Mammary epithelial cell (primary cell): ENCODE measurements at regions of chr17 and their contacts with region 1.

Region 1: DNA sequence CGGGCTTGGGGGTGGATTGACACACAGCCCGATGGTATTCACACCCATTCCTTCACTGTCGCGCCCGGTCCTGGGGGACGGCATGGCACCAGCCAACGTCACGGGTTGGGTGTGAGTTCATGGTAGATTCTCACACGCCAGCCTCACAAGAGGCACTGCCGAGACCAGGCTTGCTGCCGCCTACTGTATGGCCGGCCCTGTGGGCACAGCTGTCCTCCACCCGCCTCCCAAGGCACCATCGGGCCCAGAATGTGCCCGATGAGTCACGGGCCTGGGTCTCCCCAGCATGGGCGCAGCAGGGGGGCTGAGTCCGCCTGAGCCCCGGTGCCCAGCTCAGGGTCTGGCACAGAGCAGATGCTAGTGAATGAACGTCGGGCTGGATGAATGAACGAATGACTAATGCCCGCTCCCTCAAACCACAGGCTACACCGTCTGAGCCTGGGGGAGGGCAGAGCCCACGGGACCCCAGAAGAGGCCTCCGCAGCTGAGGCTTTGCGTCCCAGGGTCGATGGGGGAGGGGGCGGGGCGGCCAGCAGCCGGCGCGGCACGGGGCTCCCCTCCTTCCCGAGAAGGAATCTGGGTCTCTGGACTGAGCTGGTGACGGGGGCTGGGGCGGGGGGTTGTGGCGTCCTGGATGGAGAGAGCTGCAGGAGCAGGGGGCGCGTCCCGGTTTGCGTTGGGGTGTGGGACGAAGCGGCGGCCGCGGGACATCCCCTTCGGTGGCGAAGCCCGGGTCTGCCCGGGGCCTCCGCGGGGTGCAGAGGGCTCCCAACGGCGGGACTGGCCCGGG is 829 bp downstream of the PITPNM3 start:
- DNase-seq: peak; percentile 76
- H3K4me3 ChIP-seq: peak overlapping the region; percentile 65 to 75 (median 67)
- H3K27ac ChIP-seq: peak overlapping the region; percentile 42
- H3K4me1 ChIP-seq: peaks cover 36% of the 10 kb centered on the region
- H3K27me3 ChIP-seq: no peaks in the 10 kb centered on the region
- CTCF ChIP-seq: peak in 1 of 2 donors; percentile 11

Region 2: GRCh38 chr17:5950878-5951277 is 604.6 kb before region 1 on chr17:
- CTCF ChIA-PET with region 1: no interaction called
- dilution Hi-C with region 1: no loop called
- in situ Hi-C with region 1: no loop called
- intact Hi-C with region 1: no loop called
- DNase-seq: no peak
- H3K4me3 ChIP-seq: no peak overlapping the region
- H3K27ac ChIP-seq: no peak overlapping the region
- H3K4me1 ChIP-seq: no peaks in the 10 kb centered on the region
- H3K27me3 ChIP-seq: peaks cover 8% of the 10 kb centered on the region
- CTCF ChIP-seq: no peak

Region 3: GRCh38 chr17:6303664-6304063 is 251.9 kb before region 1 on chr17:
- CTCF ChIA-PET with region 1: no interaction called
- dilution Hi-C with region 1: no loop called
- in situ Hi-C with region 1: no loop called
- intact Hi-C with region 1: no loop called
- DNase-seq: peak; percentile 34
- H3K4me3 ChIP-seq: no peak overlapping the region
- H3K27ac ChIP-seq: no peak overlapping the region
- H3K4me1 ChIP-seq: no peaks in the 10 kb centered on the region
- H3K27me3 ChIP-seq: no peaks in the 10 kb centered on the region
- CTCF ChIP-seq: no peak

Region 4: GRCh38 chr17:6507535-6507934 is 48.0 kb before region 1 on chr17:
- CTCF ChIA-PET with region 1: no interaction called
- dilution Hi-C with region 1: loop called (anchors 5 kb)
- in situ Hi-C with region 1: loop called in 1 of 2 experiments (anchors 10 kb)
- intact Hi-C with region 1: loop called (anchors 1 kb)
- DNase-seq: peak; percentile 86
- H3K4me3 ChIP-seq: no peak overlapping the region
- H3K27ac ChIP-seq: no peak overlapping the region
- H3K4me1 ChIP-seq: peaks cover 30% of the 10 kb centered on the region
- H3K27me3 ChIP-seq: no peaks in the 10 kb centered on the region
- CTCF ChIP-seq: no peak

Region 5: DNA sequence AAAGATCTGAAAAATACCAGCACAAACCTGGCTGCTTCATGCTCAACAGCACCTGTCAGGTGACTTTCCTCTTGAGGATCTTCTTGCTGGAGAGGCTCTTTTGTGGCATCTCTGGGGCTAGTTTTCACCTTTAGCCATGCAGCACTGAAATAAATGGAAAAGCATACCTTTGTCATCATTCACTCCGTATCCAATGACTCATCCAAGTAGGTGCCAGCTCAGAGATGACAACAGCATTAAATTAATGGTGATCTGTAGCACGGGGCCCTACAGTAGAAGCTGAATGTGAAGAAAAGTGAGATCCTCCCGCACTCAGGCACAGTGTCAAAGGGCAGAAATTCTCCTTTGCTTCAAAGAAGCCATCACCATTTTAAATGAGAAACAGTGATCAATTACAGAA is 52.8 kb after region 1 on chr17:
- CTCF ChIA-PET with region 1: no interaction called
- dilution Hi-C with region 1: loop called (anchors 5 kb)
- in situ Hi-C with region 1: no loop called
- intact Hi-C with region 1: no loop called
- DNase-seq: peak; percentile 70
- H3K4me3 ChIP-seq: no peak overlapping the region
- H3K27ac ChIP-seq: peak overlapping the region; percentile 40
- H3K4me1 ChIP-seq: peaks cover 9% of the 10 kb centered on the region
- H3K27me3 ChIP-seq: no peaks in the 10 kb centered on the region
- CTCF ChIP-seq: no peak

Region 6: GRCh38 chr17:6640536-6641373 is 85.2 kb after region 1 on chr17 and contains the starts of genes KIAA0753 and TXNDC17:
- CTCF ChIA-PET with region 1: no interaction called
- dilution Hi-C with region 1: no loop called
- in situ Hi-C with region 1: loop called in 1 of 2 experiments (anchors 10 kb)
- intact Hi-C with region 1: loop called (anchors 2 kb)
- DNase-seq: peak; percentile 89
- H3K4me3 ChIP-seq: peak within 1 kb of the TSS; percentile 66 to 97 (median 79)
- H3K27ac ChIP-seq: peak within 1 kb of the TSS; percentile 87
- H3K4me1 ChIP-seq: peaks cover 43% of the 10 kb centered on the region
- H3K27me3 ChIP-seq: no peaks in the 10 kb centered on the region
- CTCF ChIP-seq: no peak
- total RNA-seq, gene KIAA0753: 23.2 to 25.2 TPM
- total RNA-seq, gene TXNDC17: 315 to 319 TPM